HCT116 (cell line): ENCODE measurements at regions of chr18 and their contacts with region 1.

Region 1: DNA sequence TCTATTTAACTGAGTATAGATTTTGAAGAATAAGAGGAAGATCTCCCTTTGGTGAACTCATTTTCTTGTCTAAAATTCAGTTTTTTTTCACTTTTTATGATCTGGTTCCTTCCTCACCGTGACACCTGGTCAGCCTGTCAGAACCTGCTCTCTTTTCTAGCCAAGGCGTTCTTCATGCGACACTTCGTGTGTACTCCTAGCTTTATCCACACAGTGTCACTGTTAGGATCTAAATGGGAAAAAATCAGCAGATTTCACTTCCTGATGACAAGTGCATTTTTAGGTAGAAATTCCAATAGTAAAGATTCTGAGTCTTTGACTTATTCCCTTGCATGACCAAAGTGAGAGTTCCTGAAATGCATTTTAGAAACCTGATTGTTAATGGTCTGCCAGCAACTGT is 89.8 kb downstream of the KLHL14 start:
- DNase-seq: no peak
- ATAC-seq: no peak
- H3K4me3 ChIP-seq: no peak overlapping the region
- H3K27ac ChIP-seq: no peak overlapping the region
- H3K4me1 ChIP-seq: no peaks in the 10 kb centered on the region
- H3K27me3 ChIP-seq: 0 out of 2 replicates have a peak, but pooled peaks cover 14% of the 10 kb centered on the region
- CTCF ChIP-seq: no peak
- POLR2A ChIP-seq: no peak
- RAD21 ChIP-seq: no peak

Region 2: DNA sequence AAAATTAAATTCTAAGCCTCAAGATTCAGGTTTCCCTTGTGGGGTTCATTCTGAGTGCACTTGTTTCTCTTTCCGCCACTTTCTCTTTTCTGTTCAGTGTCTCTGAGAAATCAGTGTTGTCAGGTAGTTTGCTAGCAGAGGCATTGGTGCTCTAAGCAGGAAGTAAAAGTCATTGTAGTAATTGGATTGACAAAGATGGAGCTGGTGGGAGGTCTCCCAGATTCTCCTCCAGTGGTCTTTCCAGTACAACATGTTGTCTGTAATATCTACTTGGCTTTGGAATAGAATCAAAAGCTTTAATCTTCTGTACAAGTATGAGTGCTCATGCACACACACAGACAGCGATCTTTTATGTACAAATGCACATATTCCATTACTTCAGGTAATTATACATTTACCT is 45.8 kb before region 1 on chr18:
- CTCF ChIA-PET with region 1: no interaction called
- POLR2A ChIA-PET with region 1: no interaction called
- RAD21 ChIA-PET with region 1: no interaction called
- intact Hi-C with region 1: loop called (anchors 1 kb)
- DNase-seq: no peak
- ATAC-seq: no peak
- H3K4me3 ChIP-seq: no peak overlapping the region
- H3K27ac ChIP-seq: no peak overlapping the region
- H3K4me1 ChIP-seq: no peaks in the 10 kb centered on the region
- H3K27me3 ChIP-seq: peaks cover 13% of the 10 kb centered on the region
- CTCF ChIP-seq: no peak
- POLR2A ChIP-seq: no peak
- RAD21 ChIP-seq: no peak

Region 3: DNA sequence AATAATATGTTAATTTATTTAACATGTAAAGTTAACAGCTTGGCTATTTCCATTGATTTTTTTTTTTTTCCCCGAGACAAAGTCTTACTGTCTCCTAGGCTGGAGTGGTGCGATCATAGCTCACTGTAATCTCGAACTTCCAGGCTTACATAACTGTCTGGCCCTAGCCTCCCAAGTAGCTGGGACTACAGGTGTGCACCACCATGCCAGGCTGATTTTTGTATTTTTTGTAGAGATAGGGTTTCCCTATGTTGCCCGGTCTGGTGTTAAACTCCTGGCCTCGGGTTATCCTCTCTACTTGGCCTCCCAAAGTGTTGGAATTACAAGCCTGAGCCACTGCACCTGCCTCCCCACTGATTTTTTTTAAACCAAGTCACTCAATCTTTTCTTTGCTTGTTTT is 122.3 kb after region 1 on chr18:
- CTCF ChIA-PET with region 1: no interaction called
- POLR2A ChIA-PET with region 1: no interaction called
- RAD21 ChIA-PET with region 1: no interaction called
- intact Hi-C with region 1: no loop called
- DNase-seq: no peak
- ATAC-seq: no peak
- H3K4me3 ChIP-seq: no peak overlapping the region
- H3K27ac ChIP-seq: no peak overlapping the region
- H3K4me1 ChIP-seq: no peaks in the 10 kb centered on the region
- H3K27me3 ChIP-seq: no peaks in the 10 kb centered on the region
- CTCF ChIP-seq: no peak
- POLR2A ChIP-seq: no peak
- RAD21 ChIP-seq: no peak